ENCODE measurements at regions of chr16 and their contacts with region 1.

Region 1: GRCh38 chr16:10509534-10510025 is 70.8 kb downstream of the EMP2 start:
- DNase-seq: peak; percentile 75
- ATAC-seq: peak; percentile 76
- H3K4me3 Mint-ChIP-seq: no peak overlapping the region
- H3K27ac Mint-ChIP-seq: peak overlapping the region; percentile 69
- H3K4me1 Mint-ChIP-seq: peaks cover 28% of the 10 kb centered on the region
- H3K27me3 Mint-ChIP-seq: no peaks in the 10 kb centered on the region

Region 2: GRCh38 chr16:10256784-10257641 is 252.6 kb before region 1 on chr16:
- CTCF ChIA-PET with region 1: interaction called, 20 read pairs
- POLR2A ChIA-PET with region 1: no interaction called
- intact Hi-C with region 1: loop called (anchors 1 kb)
- DNase-seq: peak; percentile 66
- ATAC-seq: peak; percentile 63
- H3K4me3 Mint-ChIP-seq: no peak overlapping the region
- H3K27ac Mint-ChIP-seq: no peak overlapping the region
- H3K4me1 Mint-ChIP-seq: peaks cover 5% of the 10 kb centered on the region
- H3K27me3 Mint-ChIP-seq: no peaks in the 10 kb centered on the region

Region 3: GRCh38 chr16:10314811-10315210 is 194.8 kb before region 1 on chr16:
- CTCF ChIA-PET with region 1: interaction called, 6 read pairs
- POLR2A ChIA-PET with region 1: no interaction called
- intact Hi-C with region 1: loop called (anchors 1 kb)
- DNase-seq: peak; percentile 8
- ATAC-seq: peak; percentile 69
- H3K4me3 Mint-ChIP-seq: no peak overlapping the region
- H3K27ac Mint-ChIP-seq: no peak overlapping the region
- H3K4me1 Mint-ChIP-seq: peaks cover 12% of the 10 kb centered on the region
- H3K27me3 Mint-ChIP-seq: no peaks in the 10 kb centered on the region

Region 4: GRCh38 chr16:10737068-10737625 is 227.6 kb after region 1 on chr16:
- CTCF ChIA-PET with region 1: interaction called, 71 read pairs
- POLR2A ChIA-PET with region 1: no interaction called
- intact Hi-C with region 1: loop called (anchors 1 kb)
- DNase-seq: peak; percentile 77
- ATAC-seq: peak; percentile 46
- H3K4me3 Mint-ChIP-seq: peak overlapping the region; percentile 36
- H3K27ac Mint-ChIP-seq: no peak overlapping the region
- H3K4me1 Mint-ChIP-seq: peaks cover 29% of the 10 kb centered on the region
- H3K27me3 Mint-ChIP-seq: no peaks in the 10 kb centered on the region

Measured in activated CD4-positive, alpha-beta T cell treated with anti-CD3 and anti-CD28 coated beads for 36 hours (primary cell).